ENCODE measurements at regions of chr10 and their contacts with region 1.

Region 1: DNA sequence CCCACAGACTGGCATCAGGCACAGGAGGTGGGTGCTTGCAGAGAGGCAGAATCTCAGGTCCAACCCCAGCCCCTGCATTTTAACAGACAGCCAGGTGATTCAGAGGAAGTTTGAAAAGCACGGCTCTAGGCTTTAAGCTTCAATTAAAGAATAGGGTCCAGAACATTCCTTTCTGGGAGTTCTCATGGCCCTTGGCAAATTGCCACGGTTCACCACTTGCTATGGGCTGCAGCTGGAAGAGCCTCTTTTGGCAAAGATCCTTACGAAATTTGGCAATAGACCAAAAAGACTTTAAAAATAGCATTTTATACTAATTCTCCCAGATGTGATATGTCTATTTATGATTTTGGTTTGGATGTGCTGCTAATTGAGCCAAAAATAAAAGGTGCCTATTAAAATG is 148.1 kb downstream of the ITGA8 start:
- DNase-seq: no peak

Region 2: GRCh38 chr10:15420858-15421257 is 150.7 kb before region 1 on chr10:
- intact Hi-C with region 1: loop called in 1 of 2 experiments (anchors 5 kb)
- DNase-seq: no peak

Region 3: GRCh38 chr10:16440396-16441133 is 869.0 kb after region 1 on chr10:
- intact Hi-C with region 1: loop called in 1 of 2 experiments (anchors 5 kb)
- DNase-seq: no peak